PC-3 (cell line): ENCODE measurements at regions of chr7 and their contacts with region 1.

Region 1: DNA sequence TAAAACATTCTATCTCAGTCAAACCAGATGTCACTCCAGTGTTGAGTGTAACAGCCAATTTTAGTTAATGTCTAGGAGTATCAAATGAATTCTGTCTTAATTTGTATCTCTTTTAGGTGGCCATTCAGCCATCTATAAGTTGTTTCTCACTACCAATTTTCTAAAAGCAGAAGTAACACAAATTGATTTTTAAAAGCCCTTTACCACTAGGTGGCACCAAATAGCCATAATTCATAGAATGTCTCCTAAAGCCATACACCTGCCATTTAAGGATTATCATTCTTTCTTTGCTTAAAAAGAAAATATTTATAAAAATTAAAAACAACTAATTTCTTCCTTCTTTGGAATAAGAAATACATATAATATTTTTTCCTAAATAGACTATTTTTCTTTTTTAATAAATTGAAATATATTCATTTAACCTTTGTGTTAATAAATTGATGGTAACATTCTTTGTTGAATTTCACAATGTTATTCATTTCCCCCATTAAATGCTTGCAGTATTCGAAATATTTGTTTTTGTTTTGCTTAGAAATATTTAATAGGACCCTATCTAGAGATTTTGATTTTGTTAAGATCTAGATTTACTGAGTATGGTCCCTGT is 107.8 kb upstream of the PPP1R3A start:
- DNase-seq: peak; percentile 82
- ATAC-seq: peak; percentile 50; the same call in 1 of the 2 replicates
- H3K4me3 ChIP-seq: no peak overlapping the region
- H3K27ac ChIP-seq: no peak overlapping the region
- H3K4me1 ChIP-seq: no peaks in the 10 kb centered on the region
- H3K27me3 ChIP-seq: peaks cover 39% of the 10 kb centered on the region
- CTCF ChIP-seq: peak; percentile 65

Region 2: DNA sequence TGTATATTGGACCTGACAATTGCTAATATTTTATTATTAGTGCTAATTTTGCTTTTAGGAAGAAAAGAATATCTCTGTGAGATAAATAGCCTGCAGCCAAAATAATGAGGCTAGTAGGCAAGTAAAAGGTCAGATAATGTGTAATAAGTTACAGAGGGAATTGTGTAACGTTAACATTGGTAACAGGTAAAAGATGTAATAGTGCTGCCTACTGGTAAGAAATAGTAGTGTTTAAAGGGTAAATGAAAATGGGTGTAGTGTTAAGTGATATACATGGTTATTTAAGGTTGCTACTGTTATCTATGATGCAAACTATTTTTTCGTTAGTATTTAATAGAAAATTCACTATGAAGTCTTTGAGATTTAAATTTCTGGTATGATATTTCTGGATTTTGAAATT is 378.8 kb after region 1 on chr7:
- CTCF ChIA-PET with region 1: no interaction called
- POLR2A ChIA-PET with region 1: no interaction called
- intact Hi-C with region 1: loop called (anchors 1 kb)
- DNase-seq: peak; percentile 34
- ATAC-seq: peak; percentile 64
- H3K4me3 ChIP-seq: no peak overlapping the region
- H3K27ac ChIP-seq: no peak overlapping the region
- H3K4me1 ChIP-seq: no peaks in the 10 kb centered on the region
- H3K27me3 ChIP-seq: peaks cover 30% of the 10 kb centered on the region
- CTCF ChIP-seq: peak; percentile 58

Region 3: GRCh38 chr7:114622221-114622620 is 595.6 kb after region 1 on chr7:
- CTCF ChIA-PET with region 1: no interaction called
- POLR2A ChIA-PET with region 1: no interaction called
- intact Hi-C with region 1: no loop called
- DNase-seq: no peak
- ATAC-seq: no peak
- H3K4me3 ChIP-seq: no peak overlapping the region
- H3K27ac ChIP-seq: no peak overlapping the region
- H3K4me1 ChIP-seq: no peaks in the 10 kb centered on the region
- H3K27me3 ChIP-seq: peaks cover 80% of the 10 kb centered on the region
- CTCF ChIP-seq: no peak

Region 4: GRCh38 chr7:115910541-115911164 is 1884.1 kb after region 1 on chr7:
- CTCF ChIA-PET with region 1: no interaction called
- POLR2A ChIA-PET with region 1: no interaction called
- intact Hi-C with region 1: loop called (anchors 1 kb)
- DNase-seq: peak; percentile 53
- ATAC-seq: peak; percentile 54; the same call in 1 of the 2 replicates
- H3K4me3 ChIP-seq: no peak overlapping the region
- H3K27ac ChIP-seq: no peak overlapping the region
- H3K4me1 ChIP-seq: no peaks in the 10 kb centered on the region
- H3K27me3 ChIP-seq: peaks cover 82% of the 10 kb centered on the region
- CTCF ChIP-seq: peak; percentile 73